ENCODE measurements at regions of chr20 and their contacts with region 1.

Region 1: DNA sequence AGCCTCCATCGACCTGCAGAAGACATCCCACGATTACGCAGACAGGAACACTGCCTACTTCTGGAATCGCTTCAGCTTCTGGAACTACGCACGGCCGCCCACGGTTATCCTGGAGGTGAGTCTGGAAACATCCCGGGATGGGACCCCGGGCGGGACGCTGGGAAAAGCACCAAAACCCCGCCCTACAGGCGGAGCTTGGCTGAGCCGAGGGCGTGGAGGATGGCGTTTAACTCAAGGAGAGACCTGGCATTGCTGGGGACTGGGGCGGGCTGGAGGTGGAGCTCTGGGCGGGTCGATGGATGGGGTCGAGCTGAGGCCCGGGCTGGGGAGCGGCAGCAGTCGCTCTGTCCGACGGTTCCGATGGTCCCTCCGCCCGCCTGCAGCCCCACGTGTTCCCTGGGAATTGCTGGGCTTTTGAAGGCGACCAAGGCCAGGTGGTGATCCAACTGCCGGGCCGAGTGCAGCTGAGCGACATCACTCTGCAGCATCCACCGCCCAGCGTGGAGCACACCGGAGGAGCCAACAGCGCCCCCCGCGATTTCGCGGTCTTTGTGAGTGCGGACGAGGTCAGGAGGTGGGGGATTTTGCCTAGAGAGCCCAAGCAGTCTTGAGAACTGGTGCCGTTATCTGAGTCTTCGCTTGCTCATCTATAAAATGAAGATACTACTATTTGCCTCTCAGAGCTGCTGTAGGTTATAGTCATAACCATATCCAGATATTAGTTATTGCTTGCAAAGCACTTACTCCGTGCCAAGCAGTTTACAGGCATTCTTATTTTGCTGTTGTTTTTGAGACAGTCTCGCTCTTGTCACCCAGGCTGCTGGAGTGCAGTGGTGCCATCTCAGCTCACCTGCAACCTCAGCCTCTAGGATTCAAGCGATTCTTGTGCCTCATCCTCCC is 3.8 kb downstream of the SPAG4 start:
- DNase-seq: peak; percentile 93
- H3K4me3 Mint-ChIP-seq: peak overlapping the region; percentile 92
- H3K27ac Mint-ChIP-seq: peak overlapping the region; percentile 94
- H3K4me1 Mint-ChIP-seq: peaks cover 30% of the 10 kb centered on the region
- H3K27me3 Mint-ChIP-seq: no peaks in the 10 kb centered on the region

Region 2: GRCh38 chr20:35454881-35455609 is 164.4 kb before region 1 on chr20 and contains the start of gene CEP250:
- intact Hi-C with region 1: loop called (anchors 2 kb)
- DNase-seq: peak; percentile 97
- H3K4me3 Mint-ChIP-seq: peak within 1 kb of the TSS; percentile 92
- H3K27ac Mint-ChIP-seq: peak within 1 kb of the TSS; percentile 98
- H3K4me1 Mint-ChIP-seq: peaks cover 29% of the 10 kb centered on the region
- H3K27me3 Mint-ChIP-seq: no peaks in the 10 kb centered on the region
- total RNA-seq, gene CEP250: 46.8 and 48.8 TPM in 2 replicates

Region 3: DNA sequence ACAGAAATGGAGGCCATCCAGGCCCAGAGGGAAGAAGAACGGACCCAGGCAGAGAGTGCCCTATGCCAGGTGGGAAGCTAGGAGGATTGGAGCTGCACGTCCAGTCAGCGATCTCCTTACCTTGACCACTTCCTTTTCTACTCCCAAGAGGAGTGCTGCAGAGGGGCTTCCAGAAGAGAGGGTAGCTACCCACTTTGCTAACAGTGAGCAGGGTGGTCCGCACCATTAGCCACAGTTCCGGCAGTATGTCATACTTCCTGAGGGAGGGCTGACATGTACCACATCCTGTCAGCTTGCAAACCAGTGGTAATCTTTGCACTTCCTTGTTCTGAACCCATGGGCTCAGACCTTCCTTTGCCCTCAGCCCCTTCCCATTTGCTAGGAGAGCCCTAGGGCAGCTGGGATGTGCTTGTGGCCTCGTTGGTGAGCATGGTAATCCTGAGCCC is 128.7 kb before region 1 on chr20:
- intact Hi-C with region 1: no loop called
- DNase-seq: peak; percentile 91
- H3K4me3 Mint-ChIP-seq: peak overlapping the region; percentile 98
- H3K27ac Mint-ChIP-seq: peak overlapping the region; percentile 99
- H3K4me1 Mint-ChIP-seq: peaks cover 42% of the 10 kb centered on the region
- H3K27me3 Mint-ChIP-seq: no peaks in the 10 kb centered on the region

Region 4: DNA sequence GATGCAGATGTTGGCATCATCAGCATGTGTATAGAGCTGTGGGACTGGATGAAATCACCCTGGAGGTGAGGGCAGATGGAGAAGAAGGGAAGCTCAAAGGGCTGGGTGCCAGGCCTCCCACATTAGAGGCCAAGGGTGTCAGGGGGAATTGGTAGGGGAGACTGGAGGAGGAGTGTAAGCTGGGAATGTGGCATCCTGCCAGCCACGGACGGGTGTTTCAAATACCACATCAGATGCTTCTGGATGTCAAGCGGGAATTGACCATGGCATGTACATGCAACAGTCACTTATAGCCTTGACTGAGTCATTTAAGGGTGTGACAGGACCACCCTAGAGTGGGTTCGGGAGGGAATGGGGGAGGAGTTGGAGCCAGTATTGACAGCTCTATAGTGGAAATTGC is 67.9 kb before region 1 on chr20:
- intact Hi-C with region 1: no loop called
- DNase-seq: no peak
- H3K4me3 Mint-ChIP-seq: no peak overlapping the region
- H3K27ac Mint-ChIP-seq: no peak overlapping the region
- H3K4me1 Mint-ChIP-seq: no peaks in the 10 kb centered on the region
- H3K27me3 Mint-ChIP-seq: no peaks in the 10 kb centered on the region

Region 5: GRCh38 chr20:35583636-35584560 is 35.5 kb before region 1 on chr20:
- intact Hi-C with region 1: no loop called
- DNase-seq: no peak
- H3K4me3 Mint-ChIP-seq: no peak overlapping the region
- H3K27ac Mint-ChIP-seq: no peak overlapping the region
- H3K4me1 Mint-ChIP-seq: no peaks in the 10 kb centered on the region
- H3K27me3 Mint-ChIP-seq: no peaks in the 10 kb centered on the region

Region 6: DNA sequence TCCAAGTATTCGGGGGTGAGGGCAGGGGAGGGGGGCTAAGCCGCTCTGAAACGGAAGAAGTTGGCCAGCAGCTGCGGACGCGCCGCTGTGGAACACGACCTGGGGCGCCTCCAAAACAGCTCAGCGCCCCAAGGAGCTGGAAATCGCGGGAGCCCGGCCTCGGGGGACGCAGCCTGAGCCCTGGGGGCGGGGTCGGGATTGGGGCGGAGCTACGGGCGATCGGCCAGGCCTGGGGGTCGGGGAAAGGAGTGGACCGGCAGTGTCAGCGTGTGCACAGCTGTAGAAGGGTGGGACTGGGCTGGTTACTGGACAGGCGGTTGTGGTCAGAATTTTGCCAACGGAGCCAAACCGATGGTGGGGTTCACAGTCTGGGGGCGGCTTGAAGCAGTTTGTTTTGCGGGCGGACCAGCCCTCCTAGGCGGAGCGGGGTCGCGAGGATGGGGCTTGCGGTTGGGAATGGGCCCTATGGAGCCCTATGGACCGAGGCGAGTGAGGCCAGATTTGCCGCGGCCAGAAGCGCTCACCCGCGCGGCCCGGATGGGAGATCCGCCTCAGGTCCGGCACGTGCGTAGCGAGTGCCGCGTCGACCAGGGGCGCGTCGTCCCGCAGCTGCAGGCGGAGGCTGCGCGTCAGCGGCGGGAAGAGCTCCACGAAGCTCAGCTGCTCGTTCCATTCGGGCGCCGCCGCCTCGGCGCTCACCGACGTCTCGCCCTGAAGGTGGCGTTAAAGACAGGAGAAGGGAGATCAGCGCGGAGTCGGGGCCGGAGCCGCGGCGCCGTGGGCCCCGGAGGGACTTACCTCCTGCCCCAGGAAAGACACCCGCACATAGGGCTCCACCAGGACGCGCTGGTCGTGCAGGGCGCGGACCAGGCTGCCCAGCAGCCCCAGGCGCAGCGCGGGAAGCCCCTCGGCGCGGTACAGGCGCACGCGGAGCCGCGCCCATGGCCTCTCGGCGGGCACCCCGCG is 18.2 kb before region 1 on chr20:
- intact Hi-C with region 1: loop called (anchors 1 kb)
- DNase-seq: peak; percentile 95
- H3K4me3 Mint-ChIP-seq: peak overlapping the region; percentile 81
- H3K27ac Mint-ChIP-seq: peak overlapping the region; percentile 63
- H3K4me1 Mint-ChIP-seq: peaks cover 9% of the 10 kb centered on the region
- H3K27me3 Mint-ChIP-seq: peaks cover 61% of the 10 kb centered on the region

Region 7: GRCh38 chr20:35699127-35699975 is 79.9 kb after region 1 on chr20 and contains the starts of genes NFS1 and ROMO1:
- intact Hi-C with region 1: loop called (anchors 1 kb)
- DNase-seq: peak; percentile 95
- H3K4me3 Mint-ChIP-seq: peak within 1 kb of the TSS; percentile 91
- H3K27ac Mint-ChIP-seq: peak within 1 kb of the TSS; percentile 98
- H3K4me1 Mint-ChIP-seq: peaks cover 40% of the 10 kb centered on the region
- H3K27me3 Mint-ChIP-seq: no peaks in the 10 kb centered on the region
- total RNA-seq, gene NFS1: 41.3 and 42.8 TPM in 2 replicates
- total RNA-seq, gene ROMO1: 82.3 and 94.9 TPM in 2 replicates

Region 8: GRCh38 chr20:35771689-35772562 is 152.5 kb after region 1 on chr20 and contains the start of gene PHF20:
- intact Hi-C with region 1: loop called (anchors 5 kb)
- DNase-seq: peak; percentile 99
- H3K4me3 Mint-ChIP-seq: peak within 1 kb of the TSS; percentile 81
- H3K27ac Mint-ChIP-seq: peak within 1 kb of the TSS; percentile 93
- H3K4me1 Mint-ChIP-seq: peaks cover 51% of the 10 kb centered on the region
- H3K27me3 Mint-ChIP-seq: no peaks in the 10 kb centered on the region
- total RNA-seq, gene PHF20: 53.8 and 62.9 TPM in 2 replicates

Region 9: DNA sequence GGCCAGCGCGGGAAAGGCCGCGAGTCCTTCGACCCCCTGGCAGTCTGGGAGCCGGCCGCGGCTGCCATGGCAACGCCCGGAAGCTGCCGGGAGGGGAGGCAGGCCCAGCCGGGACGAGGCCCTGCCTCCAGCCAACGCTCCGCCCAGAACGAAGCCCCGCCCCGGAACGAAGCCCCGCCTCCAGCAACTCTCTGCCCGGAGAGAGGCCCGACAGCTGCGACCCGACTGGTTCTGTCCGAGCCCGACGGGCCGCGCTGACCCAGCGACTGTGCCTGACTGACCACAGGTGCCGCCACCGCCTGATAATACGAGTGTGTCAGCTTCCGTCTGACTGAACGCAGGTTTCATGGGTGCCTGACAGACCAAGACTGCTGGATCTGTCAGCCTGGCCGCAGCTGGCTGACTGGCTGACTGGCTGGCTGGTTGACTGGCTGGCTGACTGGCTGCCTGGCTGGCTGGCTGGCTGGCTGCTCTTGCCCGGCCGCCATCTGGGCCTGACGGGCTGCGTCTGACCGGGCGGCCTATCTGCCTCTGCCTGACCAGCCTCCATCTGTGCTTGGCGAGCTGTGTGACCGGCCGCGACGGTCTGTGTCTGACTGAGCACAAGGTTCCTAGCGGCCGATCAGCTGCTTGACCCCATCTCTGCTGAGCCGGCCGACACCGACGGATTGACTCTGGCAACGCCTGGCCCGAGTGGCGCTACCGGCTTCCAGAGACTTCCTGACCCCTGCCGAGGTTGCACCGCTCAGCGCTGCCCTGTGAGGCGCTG is 445.4 kb after region 1 on chr20:
- intact Hi-C with region 1: no loop called
- DNase-seq: peak; percentile 97
- H3K4me3 Mint-ChIP-seq: peak overlapping the region; percentile 85
- H3K27ac Mint-ChIP-seq: no peak overlapping the region
- H3K4me1 Mint-ChIP-seq: peaks cover 6% of the 10 kb centered on the region
- H3K27me3 Mint-ChIP-seq: peaks cover 30% of the 10 kb centered on the region